Endothelial cell of umbilical vein (primary cell): ENCODE measurements at regions of chr6 and their contacts with region 1.

Region 1: GRCh38 chr6:34196126-34196830 is 40.4 kb upstream of the HMGA1 start:
- DNase-seq: peak; percentile 70
- H3K4me3 ChIP-seq: peak overlapping the region in 2 of 3 experiments; percentile 16 to 26
- H3K27ac ChIP-seq: no peak overlapping the region
- H3K4me1 ChIP-seq: peaks cover 9% of the 10 kb centered on the region
- H3K27me3 ChIP-seq: no peaks in the 10 kb centered on the region
- CTCF ChIP-seq: peak; percentile 96 to 98
- POLR2A ChIP-seq: no peak

Region 2: GRCh38 chr6:34207695-34208443 is 11.6 kb after region 1 on chr6:
- CTCF ChIA-PET with region 1: interaction called, 22 read pairs
- POLR2A ChIA-PET with region 1: no interaction called
- dilution Hi-C with region 1: no loop called
- intact Hi-C with region 1: no loop called
- DNase-seq: no peak
- H3K4me3 ChIP-seq: no peak overlapping the region
- H3K27ac ChIP-seq: no peak overlapping the region
- H3K4me1 ChIP-seq: no peaks in the 10 kb centered on the region
- H3K27me3 ChIP-seq: no peaks in the 10 kb centered on the region
- CTCF ChIP-seq: no peak
- POLR2A ChIP-seq: no peak

Region 3: DNA sequence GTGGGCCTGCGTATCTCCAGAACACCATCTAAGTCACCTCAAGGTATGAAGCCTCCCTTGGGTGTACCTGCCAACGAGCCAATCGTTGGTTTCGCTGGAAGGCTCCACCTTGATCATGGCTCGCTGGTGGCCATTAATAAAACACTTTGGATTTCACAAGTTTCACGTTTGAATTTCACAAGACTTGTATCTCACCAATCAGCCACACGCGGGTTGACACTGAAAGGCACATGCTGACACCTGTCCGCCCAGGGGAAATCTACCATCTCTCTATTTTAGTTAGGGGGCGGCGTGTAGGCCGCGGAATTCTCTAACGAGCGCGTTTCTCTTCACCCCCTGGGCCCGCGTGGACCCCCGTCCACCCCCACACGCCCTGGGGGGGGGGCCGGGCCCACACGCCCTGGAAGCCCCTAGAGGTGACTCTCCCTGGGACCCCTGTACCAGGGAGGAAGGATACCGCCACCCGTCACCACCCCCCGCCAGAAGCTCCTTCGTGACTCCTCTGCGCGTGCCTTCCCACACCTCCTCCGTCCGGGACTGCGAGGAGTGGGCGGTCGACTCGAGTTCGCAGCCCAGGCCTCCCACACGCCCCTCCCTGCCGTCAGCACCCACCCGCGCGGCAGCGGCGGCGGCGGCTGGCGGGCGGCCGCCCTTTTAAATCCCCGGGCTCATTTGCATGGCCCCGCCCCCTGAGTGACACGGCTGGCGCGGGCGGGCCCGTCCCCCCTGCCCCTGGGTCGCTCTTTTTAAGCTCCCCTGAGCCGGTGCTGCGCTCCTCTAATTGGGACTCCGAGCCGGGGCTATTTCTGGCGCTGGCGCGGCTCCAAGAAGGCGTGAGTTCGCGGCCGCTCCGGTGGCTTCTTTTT is 40.1 kb after region 1 on chr6 and contains the start of gene HMGA1:
- CTCF ChIA-PET with region 1: interaction called, 74 read pairs
- POLR2A ChIA-PET with region 1: interaction called, 4 read pairs
- dilution Hi-C with region 1: no loop called
- intact Hi-C with region 1: loop called (anchors 1 kb)
- DNase-seq: peak; percentile 88
- H3K4me3 ChIP-seq: peak within 1 kb of the TSS; percentile 94 to 98 (median 97)
- H3K27ac ChIP-seq: peak within 1 kb of the TSS; percentile 91
- H3K4me1 ChIP-seq: peaks cover 40% of the 10 kb centered on the region
- H3K27me3 ChIP-seq: no peaks in the 10 kb centered on the region
- CTCF ChIP-seq: no peak
- POLR2A ChIP-seq: peak; percentile 98
- total RNA-seq, gene HMGA1: 1,031 and 1,108 TPM in 2 replicates

Region 4: DNA sequence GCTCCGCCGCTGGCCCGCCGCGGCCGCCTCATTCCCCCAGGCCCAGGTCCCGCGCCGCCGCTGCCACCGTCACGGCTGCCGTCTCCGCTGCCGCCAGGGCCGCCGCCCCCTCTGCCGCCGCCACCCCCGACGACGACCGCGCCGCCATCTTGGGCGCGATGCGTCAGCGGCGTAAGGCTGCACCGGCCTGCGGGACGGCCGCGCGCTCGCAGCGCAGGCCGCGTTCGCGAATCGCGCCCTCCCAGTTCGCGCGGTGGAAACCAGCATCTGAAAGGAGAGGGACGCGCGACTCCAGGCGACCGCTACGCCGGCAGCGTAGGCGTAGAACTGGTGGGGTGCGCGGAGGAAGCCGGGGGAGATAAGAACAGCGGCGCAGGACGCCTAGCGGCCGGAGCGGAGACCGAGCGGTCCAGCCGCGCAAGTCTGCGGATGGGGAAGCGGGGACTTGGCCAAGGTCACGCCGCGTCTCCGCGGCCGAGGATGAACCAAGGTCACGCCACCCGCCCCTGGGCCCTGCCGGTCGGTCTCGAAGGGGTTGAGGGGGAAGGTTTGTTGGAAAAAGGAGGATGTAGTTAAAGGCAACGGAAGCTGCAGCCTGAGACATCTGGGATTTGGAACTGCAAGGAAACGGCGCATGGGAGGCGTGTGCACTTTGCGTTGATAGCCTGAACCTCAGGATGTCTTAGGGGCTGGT is 196.4 kb after region 1 on chr6 and contains the start of gene NUDT3:
- CTCF ChIA-PET with region 1: interaction called, 10 read pairs
- POLR2A ChIA-PET with region 1: no interaction called
- dilution Hi-C with region 1: no loop called
- intact Hi-C with region 1: loop called (anchors 1 kb)
- DNase-seq: peak; percentile 96
- H3K4me3 ChIP-seq: peak within 1 kb of the TSS; percentile 84 to 98 (median 96)
- H3K27ac ChIP-seq: peak within 1 kb of the TSS; percentile 27
- H3K4me1 ChIP-seq: peaks cover 11% of the 10 kb centered on the region
- H3K27me3 ChIP-seq: no peaks in the 10 kb centered on the region
- CTCF ChIP-seq: peak; percentile 89 to 95
- POLR2A ChIP-seq: peak; percentile 31
- total RNA-seq, gene NUDT3: 30.9 and 31.7 TPM in 2 replicates

Region 5: DNA sequence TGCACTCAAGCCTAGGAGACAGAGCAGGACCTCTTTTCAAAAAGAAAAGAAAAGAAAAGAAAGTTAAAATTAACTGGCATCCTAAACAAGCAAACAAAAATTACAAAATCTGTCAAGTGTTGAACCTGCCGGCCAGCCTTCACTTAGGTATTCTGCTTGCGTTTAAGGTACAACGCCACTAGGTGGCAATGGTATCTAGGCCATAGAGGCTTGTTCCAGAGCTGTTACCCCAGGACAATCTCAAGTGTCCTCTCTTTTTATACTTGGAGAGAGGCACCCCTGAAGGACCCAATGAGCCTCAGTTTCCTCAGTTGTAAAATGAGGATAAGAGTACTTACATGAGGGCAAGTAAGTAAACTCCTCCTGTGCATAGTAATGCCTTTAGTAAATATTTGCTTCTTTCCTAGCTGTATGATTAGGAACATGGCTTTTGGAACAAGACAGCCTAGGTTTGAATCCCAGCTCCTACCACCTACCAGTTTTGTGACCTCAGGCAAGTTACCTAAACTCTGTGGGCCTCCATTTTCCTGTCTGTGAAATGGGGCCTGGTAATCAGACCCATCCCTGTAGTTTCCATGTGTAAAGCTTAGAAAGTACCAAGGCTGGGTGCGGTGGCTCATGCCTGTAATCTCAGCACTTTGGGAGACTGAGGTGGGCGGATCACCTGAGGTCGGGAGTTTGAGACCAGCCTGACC is 263.8 kb after region 1 on chr6:
- CTCF ChIA-PET with region 1: interaction called, 10 read pairs
- POLR2A ChIA-PET with region 1: interaction called, 4 read pairs
- dilution Hi-C with region 1: no loop called
- intact Hi-C with region 1: no loop called
- DNase-seq: peak; percentile 60
- H3K4me3 ChIP-seq: no peak overlapping the region
- H3K27ac ChIP-seq: no peak overlapping the region
- H3K4me1 ChIP-seq: no peaks in the 10 kb centered on the region
- H3K27me3 ChIP-seq: peaks cover 0 to 10% of the 10 kb centered on the region in 2 experiments
- CTCF ChIP-seq: peak; percentile 61 to 70
- POLR2A ChIP-seq: no peak